Right ventricle myocardium inferior (tissue), 1 donor: ENCODE measurements at regions of chr2 and their contacts with region 1.

Region 1: GRCh38 chr2:12442476-12442847 is 274.3 kb upstream of the TRIB2 start:
- DNase-seq: no peak
- ATAC-seq: no peak

Region 2: GRCh38 chr2:12486205-12487118 is 44.0 kb after region 1 on chr2:
- intact Hi-C with region 1: loop called (anchors 1 kb)
- DNase-seq: no peak
- ATAC-seq: peak; percentile 54